Vagina (tissue), 2 donors: ENCODE measurements at regions of chr9 and their contacts with region 1.

Region 1: GRCh38 chr9:129413537-129414376 is 207.1 kb downstream of the C9orf50 start:
- DNase-seq: peak in 1 of 2 donors; percentile 96
- H3K4me3 ChIP-seq: peak overlapping the region; percentile 52 to 65
- H3K27ac ChIP-seq: peak overlapping the region; percentile 98
- H3K4me1 ChIP-seq: peaks cover 45% of the 10 kb centered on the region
- H3K27me3 ChIP-seq: no peaks in the 10 kb centered on the region
- CTCF ChIP-seq: no peak
- POLR2A ChIP-seq: peak in 1 of 2 donors; percentile 97

Region 2: GRCh38 chr9:128020692-128021091 is 1393.1 kb before region 1 on chr9:
- intact Hi-C with region 1: no loop called
- DNase-seq: no peak
- H3K4me3 ChIP-seq: no peak overlapping the region
- H3K27ac ChIP-seq: no peak overlapping the region
- H3K4me1 ChIP-seq: peaks cover 5% of the 10 kb centered on the region
- H3K27me3 ChIP-seq: no peaks in the 10 kb centered on the region
- CTCF ChIP-seq: no peak
- POLR2A ChIP-seq: no peak

Region 3: DNA sequence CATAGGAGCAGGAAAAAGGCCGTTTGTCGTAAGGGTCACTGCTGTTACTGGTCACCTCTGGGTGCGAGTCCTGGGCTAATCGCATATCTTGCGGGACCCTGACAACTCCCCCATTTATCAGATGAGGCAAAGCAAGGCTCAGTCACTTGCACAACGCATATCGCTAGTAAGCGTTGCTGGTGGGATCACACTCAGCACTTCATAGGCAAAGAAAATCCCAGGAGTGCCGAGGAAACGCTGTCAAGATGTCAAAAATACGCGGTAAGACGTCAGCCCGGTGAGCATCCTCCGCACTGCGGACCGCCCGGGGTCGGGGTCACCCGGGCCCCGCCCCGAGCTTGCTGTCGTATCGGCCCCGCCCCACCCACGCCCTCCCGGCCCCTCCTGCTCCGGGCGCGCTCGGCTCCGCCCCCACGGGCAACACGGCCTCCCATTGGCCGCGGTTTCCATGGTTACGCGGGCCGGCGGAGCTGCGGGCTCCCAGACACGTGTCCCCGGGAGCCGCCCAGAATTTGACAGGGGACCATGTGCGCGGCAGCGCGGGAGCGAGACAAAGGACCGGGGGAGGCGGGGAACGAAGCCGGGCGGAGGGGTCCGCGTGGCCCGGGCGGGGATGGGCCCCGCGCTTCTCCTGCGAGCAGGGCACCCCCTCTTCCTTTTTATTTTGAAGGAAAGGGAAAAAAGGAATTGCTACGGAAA is 155.5 kb before region 1 on chr9:
- intact Hi-C with region 1: no loop called
- DNase-seq: no peak
- H3K4me3 ChIP-seq: peak overlapping the region; percentile 29 to 48
- H3K27ac ChIP-seq: peak overlapping the region; percentile 67
- H3K4me1 ChIP-seq: peaks cover 30% of the 10 kb centered on the region
- H3K27me3 ChIP-seq: no peaks in the 10 kb centered on the region
- CTCF ChIP-seq: no peak
- POLR2A ChIP-seq: no peak

Region 4: GRCh38 chr9:129333953-129334724 is 79.6 kb before region 1 on chr9:
- intact Hi-C with region 1: loop called (anchors 5 kb)
- DNase-seq: peak in 1 of 2 donors; percentile 97
- H3K4me3 ChIP-seq: peak overlapping the region; percentile 23 to 31
- H3K27ac ChIP-seq: peak overlapping the region; percentile 92
- H3K4me1 ChIP-seq: peaks cover 70% of the 10 kb centered on the region
- H3K27me3 ChIP-seq: no peaks in the 10 kb centered on the region
- CTCF ChIP-seq: no peak
- POLR2A ChIP-seq: no peak

Region 5: DNA sequence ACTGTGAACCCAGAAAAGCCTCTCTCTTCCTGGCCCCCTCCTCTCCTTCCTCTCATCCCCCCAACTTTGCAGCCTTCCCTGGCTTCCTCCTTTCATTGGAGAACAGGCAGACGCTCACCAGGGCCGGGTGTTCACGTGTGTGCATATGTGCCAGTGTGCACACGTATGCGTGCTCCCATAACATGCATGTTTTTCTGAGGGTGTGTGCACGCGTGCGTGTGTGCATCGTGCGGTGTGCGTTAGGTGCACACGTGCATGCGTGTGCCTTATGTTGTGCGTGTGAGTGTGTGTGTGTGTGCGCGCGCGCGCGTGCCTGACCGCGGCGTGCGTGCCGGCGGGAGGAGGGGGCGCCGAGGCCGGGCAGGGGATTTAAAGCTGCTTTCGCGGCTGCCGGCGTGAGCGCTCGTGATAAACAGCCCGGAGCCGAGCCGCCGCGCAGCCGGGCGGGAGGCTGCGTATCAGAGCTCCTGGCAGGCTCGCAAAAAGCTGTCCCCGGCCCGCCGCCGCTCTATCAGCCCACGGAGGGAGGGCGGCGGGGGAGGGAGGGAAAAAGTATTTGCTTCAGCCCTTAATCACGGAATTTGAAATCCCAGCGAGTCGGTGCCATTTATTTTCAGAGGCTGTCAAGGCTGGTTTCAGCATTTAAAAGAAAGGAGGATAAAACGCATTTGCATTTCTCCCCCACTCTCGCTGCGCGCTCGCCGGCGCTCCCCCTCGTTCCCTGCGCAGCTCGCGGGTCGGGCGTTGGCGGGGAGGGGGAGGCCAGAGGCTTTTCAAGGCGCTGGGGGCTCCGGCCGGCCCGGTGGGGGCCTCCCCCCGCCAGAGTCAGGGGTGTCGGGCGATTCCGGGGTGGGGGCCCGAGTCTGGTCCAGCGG is 23.2 kb after region 1 on chr9:
- intact Hi-C with region 1: no loop called
- DNase-seq: no peak
- H3K4me3 ChIP-seq: peak overlapping the region; percentile 52 to 59
- H3K27ac ChIP-seq: peak overlapping the region; percentile 86
- H3K4me1 ChIP-seq: peaks cover 22% of the 10 kb centered on the region
- H3K27me3 ChIP-seq: no peaks in the 10 kb centered on the region
- CTCF ChIP-seq: no peak
- POLR2A ChIP-seq: no peak

Region 6: GRCh38 chr9:129458663-129459555 is 45.2 kb after region 1 on chr9:
- intact Hi-C with region 1: no loop called
- DNase-seq: no peak
- H3K4me3 ChIP-seq: peak overlapping the region in 1 of 2 donors; percentile 49
- H3K27ac ChIP-seq: peak overlapping the region; percentile 100
- H3K4me1 ChIP-seq: peaks cover 68% of the 10 kb centered on the region
- H3K27me3 ChIP-seq: no peaks in the 10 kb centered on the region
- CTCF ChIP-seq: no peak
- POLR2A ChIP-seq: no peak